Heart left ventricle (tissue), 16 donors: ENCODE measurements at regions of chr18 and their contacts with region 1.

Region 1: DNA sequence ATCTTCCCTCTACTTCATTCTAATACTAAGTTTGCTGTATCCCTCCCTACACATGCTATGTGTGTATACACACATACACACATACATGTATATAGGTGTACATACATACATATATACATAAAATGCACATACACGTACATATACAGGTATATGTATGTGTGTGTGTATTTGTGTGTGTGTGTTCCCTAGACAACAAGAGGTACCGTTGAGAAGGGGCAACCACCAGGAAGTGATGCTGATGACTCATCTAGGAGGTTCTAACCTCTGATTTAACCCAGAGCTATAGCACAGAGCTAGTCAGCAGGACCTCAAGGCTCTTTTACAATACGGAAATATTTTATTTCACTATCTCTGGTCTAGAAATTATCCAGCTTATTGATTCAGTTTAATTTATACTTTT is 139.2 kb downstream of the LAMA3 start:
- DNase-seq: no peak
- ATAC-seq: no peak
- H3K4me3 ChIP-seq: no peak overlapping the region
- H3K27ac ChIP-seq: no peak overlapping the region
- H3K4me1 ChIP-seq: peaks cover 0 to 35% (median 16%) of the 10 kb centered on the region in 12 donors
- H3K27me3 ChIP-seq: no peaks in the 10 kb centered on the region
- CTCF ChIP-seq: no peak
- POLR2A ChIP-seq: no peak

Region 2: DNA sequence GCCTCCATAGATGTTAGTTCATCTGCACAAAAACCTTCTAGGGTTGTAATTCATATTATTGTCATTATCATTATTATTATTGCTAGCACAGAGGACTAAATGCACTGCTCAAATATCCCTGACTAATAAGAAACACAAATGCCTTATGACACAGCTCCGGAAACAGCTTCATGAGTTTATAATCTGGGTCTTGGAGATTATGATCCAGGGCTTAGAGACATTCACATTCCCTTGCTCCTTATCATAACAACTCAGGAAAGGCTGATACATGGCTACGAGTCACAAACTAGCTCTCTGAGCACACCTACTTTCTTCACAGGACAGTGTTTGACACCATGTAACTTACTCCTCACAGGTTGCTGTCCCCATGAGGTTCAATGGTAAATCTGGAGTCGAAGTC is 83.9 kb after region 1 on chr18:
- intact Hi-C with region 1: loop called in 5 of 10 experiments (anchors 5 to 10 kb)
- DNase-seq: no peak
- ATAC-seq: no peak
- H3K4me3 ChIP-seq: no peak overlapping the region
- H3K27ac ChIP-seq: no peak overlapping the region
- H3K4me1 ChIP-seq: no peaks in the 10 kb centered on the region
- H3K27me3 ChIP-seq: no peaks in the 10 kb centered on the region
- CTCF ChIP-seq: no peak
- POLR2A ChIP-seq: no peak

Region 3: DNA sequence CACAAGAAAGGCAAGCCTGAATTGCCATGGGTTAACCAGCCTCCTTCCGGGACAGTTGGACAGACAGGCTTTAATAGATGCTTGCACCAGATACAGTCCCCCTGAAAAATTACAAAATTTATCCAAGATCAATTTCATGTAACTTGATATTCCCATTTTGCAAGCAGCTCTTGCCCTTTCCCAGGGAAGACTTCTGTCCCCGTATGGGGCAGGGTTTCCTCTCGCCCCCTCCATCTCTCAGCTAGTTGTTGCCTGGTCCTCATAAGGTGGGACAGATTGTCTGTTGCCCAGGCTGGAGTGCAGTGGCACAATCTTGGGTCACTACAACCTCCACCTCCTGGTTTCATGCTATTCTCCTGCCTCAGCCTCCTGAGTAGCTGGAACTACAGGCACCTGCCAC is 247.3 kb after region 1 on chr18:
- intact Hi-C with region 1: loop called in 1 of 10 experiments (anchors 10 kb)
- DNase-seq: no peak
- ATAC-seq: no peak
- H3K4me3 ChIP-seq: no peak overlapping the region
- H3K27ac ChIP-seq: peak overlapping the region; percentile 4 to 88 (median 70)
- H3K4me1 ChIP-seq: peaks cover 0 to 27% (median 15%) of the 10 kb centered on the region in 12 donors
- H3K27me3 ChIP-seq: no peaks in the 10 kb centered on the region
- CTCF ChIP-seq: no peak
- POLR2A ChIP-seq: no peak